ENCODE measurements at regions of chr2 and their contacts with region 1.

Region 1: GRCh38 chr2:206159346-206160124 is at the starts of genes EEF1B2 and NDUFS1:
- DNase-seq: peak; percentile 96 to 98 (median 97)
- H3K4me3 ChIP-seq: peak within 1 kb of the TSS; percentile 56 to 93 (median 90)
- H3K4me3 Mint-ChIP-seq: peak within 1 kb of the TSS; percentile 96 to 97
- H3K27ac ChIP-seq: peak within 1 kb of the TSS; percentile 82 to 97
- H3K27ac Mint-ChIP-seq: peak within 1 kb of the TSS; percentile 94 to 98 (median 98)
- H3K4me1 ChIP-seq: peaks cover 18 to 29% of the 10 kb centered on the region in 2 donors
- H3K4me1 Mint-ChIP-seq: peaks cover 27% of the 10 kb centered on the region
- H3K27me3 ChIP-seq: no peaks in the 10 kb centered on the region
- H3K27me3 Mint-ChIP-seq: no peaks in the 10 kb centered on the region
- CTCF ChIP-seq: no peak
- polyA plus RNA-seq, gene EEF1B2: 330 to 406 (median 355) TPM
- polyA plus RNA-seq, gene NDUFS1: 22.8 to 43.9 (median 37.9) TPM

Region 2: DNA sequence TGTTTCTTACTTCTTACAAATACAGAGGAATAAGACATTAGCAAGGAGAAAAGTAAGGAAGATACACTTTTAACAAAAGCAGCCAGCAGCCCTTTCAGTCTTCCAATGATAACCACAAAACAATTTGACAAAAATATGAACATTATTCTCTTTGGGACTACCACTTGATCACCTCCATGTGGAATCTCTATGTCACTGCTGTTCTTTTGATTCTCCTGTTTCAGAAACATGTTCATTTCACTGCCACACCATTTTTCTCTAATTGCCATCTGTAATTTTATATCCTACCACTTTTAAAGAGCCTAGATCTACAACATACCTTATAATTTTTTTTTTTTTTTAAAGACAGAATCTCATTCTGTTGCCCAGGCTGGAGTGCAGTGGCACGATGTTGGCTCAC is 84.4 kb before region 1 on chr2:
- intact Hi-C with region 1: no loop called
- DNase-seq: no peak
- H3K4me3 ChIP-seq: no peak overlapping the region
- H3K4me3 Mint-ChIP-seq: no peak overlapping the region
- H3K27ac ChIP-seq: no peak overlapping the region
- H3K27ac Mint-ChIP-seq: no peak overlapping the region
- H3K4me1 ChIP-seq: peaks cover 5 to 8% of the 10 kb centered on the region in 2 donors
- H3K4me1 Mint-ChIP-seq: peaks cover 26% of the 10 kb centered on the region
- H3K27me3 ChIP-seq: no peaks in the 10 kb centered on the region
- H3K27me3 Mint-ChIP-seq: no peaks in the 10 kb centered on the region
- CTCF ChIP-seq: no peak

Region 3: DNA sequence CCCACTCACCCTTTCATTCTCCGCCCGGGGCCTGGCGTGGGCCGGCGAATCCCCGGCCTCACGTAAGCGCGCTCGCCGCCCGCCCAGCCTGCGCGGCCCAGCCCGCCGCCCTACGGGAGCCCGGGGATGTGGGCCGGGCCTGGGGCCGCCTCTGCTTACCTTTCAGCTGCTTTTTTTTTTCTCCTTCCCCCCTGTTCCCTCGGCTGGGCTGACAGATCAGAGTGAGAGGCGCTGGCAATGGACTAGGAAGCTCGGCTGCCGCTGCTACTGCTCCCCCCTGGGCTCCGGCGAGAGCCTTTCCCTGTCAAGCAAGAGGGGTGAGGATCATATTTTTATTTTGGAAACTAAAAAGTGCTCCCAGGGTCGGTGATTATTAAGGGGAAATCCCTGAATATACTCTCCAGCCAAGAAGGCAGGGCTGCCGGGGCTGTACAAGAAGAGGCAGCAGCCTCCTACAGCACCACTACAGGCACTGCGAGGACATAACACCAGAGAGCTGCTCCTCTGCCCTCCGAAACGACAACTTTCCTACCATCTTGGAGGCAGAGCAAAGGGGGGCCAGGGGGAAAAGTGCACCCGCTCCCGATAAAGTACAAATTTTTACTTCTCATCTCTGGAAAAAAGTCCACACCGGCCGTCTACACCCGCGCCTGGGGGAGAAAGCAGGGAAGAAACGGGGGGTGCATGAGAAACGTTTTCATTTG is 73.6 kb before region 1 on chr2 and contains the start of gene INO80D:
- intact Hi-C with region 1: loop called (anchors 5 kb)
- DNase-seq: peak; percentile 78 to 84 (median 80)
- H3K4me3 ChIP-seq: peak within 1 kb of the TSS; percentile 79 to 88 (median 88)
- H3K4me3 Mint-ChIP-seq: peak within 1 kb of the TSS; percentile 99 to 100
- H3K27ac ChIP-seq: peak within 1 kb of the TSS; percentile 96 to 100
- H3K27ac Mint-ChIP-seq: peak within 1 kb of the TSS; percentile 96 to 99 (median 99)
- H3K4me1 ChIP-seq: peaks cover 21 to 39% of the 10 kb centered on the region in 2 donors
- H3K4me1 Mint-ChIP-seq: peaks cover 33% of the 10 kb centered on the region
- H3K27me3 ChIP-seq: no peaks in the 10 kb centered on the region
- H3K27me3 Mint-ChIP-seq: no peaks in the 10 kb centered on the region
- CTCF ChIP-seq: peak; percentile 63
- polyA plus RNA-seq, gene INO80D: 3.8 to 6.1 (median 4.4) TPM

Region 4: GRCh38 chr2:206289391-206289790 is 129.9 kb after region 1 on chr2:
- intact Hi-C with region 1: no loop called
- DNase-seq: no peak
- H3K4me3 ChIP-seq: no peak overlapping the region
- H3K4me3 Mint-ChIP-seq: no peak overlapping the region
- H3K27ac ChIP-seq: no peak overlapping the region
- H3K27ac Mint-ChIP-seq: no peak overlapping the region
- H3K4me1 ChIP-seq: no peaks in the 10 kb centered on the region
- H3K4me1 Mint-ChIP-seq: no peaks in the 10 kb centered on the region
- H3K27me3 ChIP-seq: peaks cover 0 to 2% of the 10 kb centered on the region in 2 donors
- H3K27me3 Mint-ChIP-seq: peaks cover 0 to 5% (median 3%) of the 10 kb centered on the region in 3 donors
- CTCF ChIP-seq: no peak